ENCODE measurements at regions of chr6 and their contacts with region 1.

Region 1: GRCh38 chr6:44655412-44656342 is 268.2 kb downstream of the CDC5L start:
- DNase-seq: peak; percentile 92
- H3K4me3 Mint-ChIP-seq: peak overlapping the region; percentile 51
- H3K27ac Mint-ChIP-seq: peak overlapping the region; percentile 80
- H3K4me1 Mint-ChIP-seq: peaks cover 13% of the 10 kb centered on the region
- H3K27me3 Mint-ChIP-seq: peaks cover 2% of the 10 kb centered on the region

Region 2: DNA sequence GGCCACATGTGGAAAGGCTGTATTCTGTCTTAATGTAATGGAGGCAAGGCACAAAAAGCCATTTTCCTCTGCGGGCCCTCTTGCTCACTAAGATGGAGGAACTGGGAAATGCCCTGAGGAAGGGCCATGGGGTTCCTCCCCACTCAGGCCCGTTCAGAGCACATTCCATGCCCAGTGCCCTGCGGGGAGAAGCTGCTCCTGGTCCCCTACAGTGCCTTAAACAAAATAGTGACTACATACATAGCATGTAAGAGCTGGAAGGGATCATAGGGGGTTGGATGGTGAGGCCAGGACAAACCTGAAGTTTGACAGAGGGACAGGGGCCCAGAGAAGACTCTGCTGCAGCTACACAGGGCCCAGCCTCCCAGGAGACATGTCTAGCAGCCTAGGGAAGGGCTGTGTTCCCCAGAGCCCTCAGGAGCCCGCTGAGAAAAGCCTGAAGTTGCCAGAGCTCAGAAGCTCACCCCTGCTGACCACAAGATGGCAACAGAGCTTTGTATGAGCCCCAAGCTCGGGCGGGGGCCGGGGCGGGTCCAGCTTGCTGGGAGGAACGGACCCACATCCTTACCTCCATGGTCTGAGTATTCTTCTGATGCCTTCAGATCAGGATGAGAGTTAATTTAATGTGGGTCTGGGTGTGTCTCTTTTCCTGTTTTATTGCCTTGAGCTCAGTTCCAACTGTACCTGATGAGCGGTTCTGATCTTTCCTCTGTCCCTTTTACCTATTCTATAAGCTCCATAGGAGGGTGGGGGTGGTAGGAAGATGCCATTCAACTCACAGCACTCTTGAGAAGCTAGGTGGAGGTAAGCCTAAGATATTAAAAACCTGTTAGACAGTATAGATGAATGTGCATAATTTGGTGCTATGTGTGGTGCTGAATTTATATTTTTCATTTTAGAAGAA is 25.3 kb before region 1 on chr6:
- intact Hi-C with region 1: no loop called
- DNase-seq: peak; percentile 75
- H3K4me3 Mint-ChIP-seq: no peak overlapping the region
- H3K27ac Mint-ChIP-seq: peak overlapping the region; percentile 16
- H3K4me1 Mint-ChIP-seq: peaks cover 11% of the 10 kb centered on the region
- H3K27me3 Mint-ChIP-seq: no peaks in the 10 kb centered on the region

Region 3: DNA sequence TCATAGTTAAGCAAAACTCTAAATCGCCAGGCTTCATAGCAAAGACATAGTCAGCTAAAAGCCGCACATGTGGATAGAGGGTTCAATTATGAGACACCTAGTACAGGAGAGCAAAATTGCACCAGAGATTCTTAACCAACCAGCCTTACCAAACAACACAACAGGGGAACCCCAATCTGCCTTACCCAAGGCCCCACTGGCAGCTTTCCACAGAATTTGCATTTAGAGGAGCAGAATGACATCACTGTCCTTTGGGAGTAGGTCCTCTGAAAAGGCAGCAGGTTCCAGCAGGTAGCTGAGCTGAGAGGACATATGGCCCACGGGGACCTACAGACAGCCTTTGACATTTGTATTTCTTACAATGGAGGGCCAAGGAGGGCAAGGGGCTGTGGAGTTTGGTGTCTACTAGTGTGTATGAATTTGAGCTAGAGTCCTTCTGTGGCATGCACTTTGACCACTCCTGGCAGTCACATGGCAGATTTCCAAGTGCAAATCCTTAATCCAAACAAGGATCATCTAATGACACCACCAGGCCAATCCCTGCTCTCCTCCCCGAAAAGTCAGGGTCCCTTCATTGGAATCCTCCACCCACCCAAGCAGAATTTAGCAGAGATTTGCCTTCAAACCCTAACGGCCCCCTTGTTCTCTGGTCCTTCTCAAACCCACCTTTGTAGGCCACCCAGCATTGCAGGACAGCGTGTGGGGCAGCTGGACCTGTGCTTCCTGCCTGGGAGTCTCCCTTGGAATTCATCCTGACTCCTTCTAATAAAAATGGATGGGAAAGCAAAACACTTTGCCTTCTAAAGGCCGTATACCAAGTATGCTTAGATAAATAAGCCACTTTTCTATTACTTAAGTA is 893.2 kb after region 1 on chr6:
- intact Hi-C with region 1: loop called (anchors 5 kb)
- DNase-seq: no peak
- H3K4me3 Mint-ChIP-seq: no peak overlapping the region
- H3K27ac Mint-ChIP-seq: no peak overlapping the region
- H3K4me1 Mint-ChIP-seq: peaks cover 12% of the 10 kb centered on the region
- H3K27me3 Mint-ChIP-seq: no peaks in the 10 kb centered on the region

Measured in activated CD4-positive, alpha-beta T cell treated with anti-CD3 and anti-CD28 coated beads, Interleukin-2, amount 10 ng/mL, durations not matched to agents 24 days and 14 days (primary cell).